ENCODE measurements at regions of chr20 and their contacts with region 1.

Region 1: GRCh38 chr20:11274141-11274594 is 600.4 kb upstream of the JAG1 start:
- DNase-seq: no peak
- ATAC-seq: peak; percentile 88

Region 2: DNA sequence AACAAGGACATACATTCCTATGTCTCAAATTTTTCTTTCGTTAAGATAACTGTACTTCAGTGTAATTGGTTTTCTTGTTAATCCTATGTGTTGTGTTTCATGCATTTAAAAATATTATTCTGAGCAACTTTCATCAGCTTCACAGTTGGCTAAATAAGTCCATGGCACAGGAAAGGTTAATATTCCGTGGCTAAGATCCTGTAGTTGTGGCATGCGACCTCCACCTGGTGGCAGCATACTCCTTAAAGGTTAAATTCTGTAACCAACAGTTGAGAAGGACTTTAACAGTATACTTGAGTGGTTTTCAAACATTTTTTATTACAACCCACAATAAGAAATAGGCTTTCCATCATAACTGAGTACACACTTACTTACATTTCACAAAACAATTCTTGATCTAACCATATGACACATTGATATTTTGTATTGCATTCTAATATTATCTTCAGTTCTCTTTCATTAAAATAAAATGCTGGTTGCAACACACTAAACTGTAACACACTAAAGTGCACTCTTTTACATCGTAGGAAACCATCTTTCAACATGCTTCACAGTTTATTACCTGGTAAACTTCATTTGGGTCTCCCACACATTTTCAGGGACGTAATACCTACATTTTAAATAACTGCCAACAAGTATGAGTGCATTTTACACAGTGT is 720.7 kb before region 1 on chr20:
- intact Hi-C with region 1: loop called (anchors 2 kb)
- DNase-seq: peak; percentile 75
- ATAC-seq: peak; percentile 77

Region 3: GRCh38 chr20:10654630-10655029 is 619.5 kb before region 1 on chr20:
- intact Hi-C with region 1: loop called (anchors 5 kb)
- DNase-seq: no peak
- ATAC-seq: peak; percentile 16

Region 4: DNA sequence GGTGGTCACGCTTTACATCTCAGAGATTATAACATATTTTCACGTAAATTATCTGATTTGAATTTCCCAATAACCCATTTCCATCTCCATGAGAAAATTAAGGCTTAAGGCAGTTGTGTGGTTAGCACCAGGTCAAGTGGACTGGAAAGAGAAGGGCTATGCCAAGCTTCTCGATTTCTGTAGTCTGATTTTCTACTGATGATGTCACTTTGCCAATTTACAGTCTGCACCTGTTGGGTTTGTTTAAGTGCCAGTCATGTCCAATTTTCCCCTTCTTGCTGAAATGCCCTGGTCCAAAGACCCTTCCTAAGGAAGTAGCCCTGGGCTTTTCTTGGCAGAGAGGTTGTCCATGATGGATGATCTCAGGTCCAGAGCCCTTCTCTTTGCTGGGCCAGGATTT is 81.2 kb after region 1 on chr20:
- intact Hi-C with region 1: no loop called
- DNase-seq: no peak
- ATAC-seq: no peak

Region 5: DNA sequence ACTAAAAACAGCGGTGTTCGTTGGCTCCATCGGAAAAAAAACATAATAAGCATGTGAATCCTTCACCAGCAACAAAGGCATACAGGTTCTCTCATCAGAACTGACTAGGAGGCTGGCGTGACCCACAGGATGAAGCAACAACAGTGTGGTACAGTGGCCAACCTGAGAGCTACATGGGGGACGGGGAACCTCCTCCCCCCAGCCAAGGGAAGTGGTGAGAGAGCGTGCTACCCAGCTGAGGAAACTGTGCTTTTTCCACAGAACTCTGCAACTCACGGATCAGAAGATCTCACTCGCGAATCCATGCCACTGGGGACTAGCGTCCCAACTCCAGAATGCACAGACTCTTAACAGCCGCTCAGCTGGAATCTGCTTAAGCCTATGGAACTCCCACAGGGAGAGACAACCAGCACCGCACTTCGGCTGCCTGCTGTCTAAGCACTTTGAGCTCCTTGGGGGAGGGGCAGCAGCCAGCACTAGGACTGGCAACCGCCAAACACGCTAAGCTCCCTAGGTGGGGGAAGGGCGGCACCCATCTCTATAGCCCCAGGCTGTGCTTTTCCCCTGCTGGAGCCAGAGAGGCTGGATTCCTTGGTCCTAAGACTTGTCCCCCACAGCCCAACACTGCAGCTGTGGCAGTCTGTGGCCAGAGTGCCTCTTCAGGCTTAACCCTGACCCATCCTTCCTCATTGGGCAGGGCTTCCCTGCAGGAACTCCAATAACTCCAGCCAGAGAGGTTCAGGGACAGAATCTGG is 105.3 kb after region 1 on chr20:
- intact Hi-C with region 1: no loop called
- DNase-seq: no peak
- ATAC-seq: no peak